Activated T-helper 1 cell treated with anti-CD3 and anti-CD28 coated beads, Interleukin-12 subunit alpha, Interleukin-12 subunit beta, Interleukin-2, Interleukin-4 antibody, amounts not matched to agents 30 ng/mL and 10 ng/mL and 1 ng/mL, durations not matched to agents 14 hours and 24 hours and 36 hours (primary cell): ENCODE measurements at regions of chr21 and their contacts with region 1.

Region 1: DNA sequence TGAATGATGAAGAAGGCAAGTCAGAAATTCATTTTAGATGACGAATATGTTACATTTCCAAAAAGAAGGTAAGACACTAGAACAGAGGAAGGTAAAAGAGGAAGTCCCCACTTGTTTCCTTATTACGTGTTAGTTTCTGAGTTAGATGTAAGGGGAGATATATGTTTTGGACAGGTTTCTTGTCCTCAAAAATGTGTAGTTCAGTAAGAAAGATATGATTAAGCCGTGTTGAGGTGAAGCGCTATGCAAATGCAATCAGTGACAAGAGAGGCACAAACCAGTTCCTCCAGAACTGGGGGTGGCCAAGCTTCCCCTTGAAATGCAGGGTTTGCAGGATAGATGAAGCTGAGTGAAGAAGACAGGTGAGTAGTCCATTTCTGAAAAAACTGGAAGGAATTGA is 293.3 kb upstream of the RUNX1 start:
- DNase-seq: no peak
- H3K4me3 Mint-ChIP-seq: peak overlapping the region; percentile 75
- H3K27ac Mint-ChIP-seq: peak overlapping the region; percentile 99
- H3K4me1 Mint-ChIP-seq: peaks cover 51% of the 10 kb centered on the region
- H3K27me3 Mint-ChIP-seq: no peaks in the 10 kb centered on the region

Region 2: DNA sequence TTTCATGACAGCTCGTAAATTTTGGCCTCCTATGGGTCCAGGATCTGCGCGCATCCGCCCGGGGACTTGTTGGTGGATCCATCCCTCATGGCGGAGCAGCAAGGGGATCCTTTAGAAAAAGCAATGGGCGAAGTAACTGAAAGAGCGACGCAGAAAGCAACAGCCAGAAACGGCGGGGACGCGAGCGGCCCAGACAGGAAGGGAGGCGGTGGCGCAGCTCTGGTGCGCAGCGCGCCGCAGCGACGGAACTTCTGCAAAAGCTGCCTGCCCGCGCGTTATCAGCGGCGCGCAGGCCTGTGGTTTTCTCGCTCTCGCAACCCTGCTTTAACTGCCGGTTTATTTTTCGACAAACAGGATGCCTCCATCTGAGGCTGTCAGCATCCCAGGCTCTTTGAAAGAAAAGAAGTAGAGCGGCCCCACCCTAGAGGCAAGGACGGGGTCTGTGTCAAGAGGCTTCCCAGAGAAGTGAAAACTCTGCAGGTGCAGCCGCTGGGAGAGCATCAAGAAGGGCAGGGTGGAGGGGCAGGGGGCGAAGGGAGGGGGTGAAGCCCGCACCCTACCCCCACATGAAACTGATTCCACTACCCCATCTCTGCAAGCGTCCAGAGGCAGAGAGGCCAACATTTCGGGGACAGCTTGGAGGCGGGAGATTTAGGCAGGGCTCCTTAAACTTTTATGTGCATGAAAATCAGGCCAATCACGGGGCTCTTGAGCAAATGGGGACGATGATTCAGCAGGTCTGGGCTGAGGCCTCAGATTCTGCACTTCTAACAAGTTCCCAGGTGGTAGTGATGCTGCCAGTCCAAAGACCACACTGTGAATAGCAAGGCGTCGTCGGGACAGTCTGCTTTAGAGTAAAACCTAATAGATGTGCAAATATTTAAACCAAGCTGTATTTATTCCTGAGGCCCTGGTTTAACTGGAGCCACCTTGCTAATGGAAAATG is 315.6 kb before region 1 on chr21:
- intact Hi-C with region 1: loop called (anchors 1 kb)
- DNase-seq: peak; percentile 83
- H3K4me3 Mint-ChIP-seq: peak overlapping the region; percentile 85
- H3K27ac Mint-ChIP-seq: peak overlapping the region; percentile 99
- H3K4me1 Mint-ChIP-seq: peaks cover 91% of the 10 kb centered on the region
- H3K27me3 Mint-ChIP-seq: no peaks in the 10 kb centered on the region

Region 3: GRCh38 chr21:35138665-35139381 is 203.6 kb before region 1 on chr21:
- intact Hi-C with region 1: loop called (anchors 1 kb)
- DNase-seq: no peak
- H3K4me3 Mint-ChIP-seq: peak overlapping the region; percentile 62
- H3K27ac Mint-ChIP-seq: peak overlapping the region; percentile 93
- H3K4me1 Mint-ChIP-seq: peaks cover 27% of the 10 kb centered on the region
- H3K27me3 Mint-ChIP-seq: no peaks in the 10 kb centered on the region

Region 4: GRCh38 chr21:35226948-35227744 is 115.3 kb before region 1 on chr21:
- intact Hi-C with region 1: loop called (anchors 5 kb)
- DNase-seq: peak; percentile 42
- H3K4me3 Mint-ChIP-seq: peak overlapping the region; percentile 27
- H3K27ac Mint-ChIP-seq: peak overlapping the region; percentile 6
- H3K4me1 Mint-ChIP-seq: peaks cover 41% of the 10 kb centered on the region
- H3K27me3 Mint-ChIP-seq: peaks cover 10% of the 10 kb centered on the region

Region 5: GRCh38 chr21:35294231-35294898 is 48.1 kb before region 1 on chr21:
- intact Hi-C with region 1: no loop called
- DNase-seq: no peak
- H3K4me3 Mint-ChIP-seq: no peak overlapping the region
- H3K27ac Mint-ChIP-seq: no peak overlapping the region
- H3K4me1 Mint-ChIP-seq: peaks cover 13% of the 10 kb centered on the region
- H3K27me3 Mint-ChIP-seq: peaks cover 2% of the 10 kb centered on the region

Region 6: DNA sequence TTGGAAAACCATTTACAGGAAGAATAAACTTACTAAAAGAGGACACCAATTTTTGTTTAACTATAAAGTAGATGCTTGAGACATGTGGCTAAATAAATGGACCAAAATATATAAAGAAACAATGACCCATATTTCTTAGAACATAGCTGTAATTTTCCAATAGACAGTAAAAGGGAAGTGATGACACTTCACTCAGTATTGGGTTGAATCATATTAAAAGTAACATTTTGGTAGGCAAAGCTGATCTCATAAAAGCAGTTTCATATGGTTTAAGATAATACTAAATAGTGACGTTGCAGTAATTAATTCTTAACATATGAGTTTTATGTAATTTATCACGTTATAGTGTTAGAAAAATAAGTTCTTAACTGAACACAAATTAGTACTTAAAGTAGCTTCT is 15.6 kb after region 1 on chr21:
- intact Hi-C with region 1: loop called (anchors 1 kb)
- DNase-seq: no peak
- H3K4me3 Mint-ChIP-seq: no peak overlapping the region
- H3K27ac Mint-ChIP-seq: peak overlapping the region; percentile 56
- H3K4me1 Mint-ChIP-seq: peaks cover 7% of the 10 kb centered on the region
- H3K27me3 Mint-ChIP-seq: no peaks in the 10 kb centered on the region

Region 7: DNA sequence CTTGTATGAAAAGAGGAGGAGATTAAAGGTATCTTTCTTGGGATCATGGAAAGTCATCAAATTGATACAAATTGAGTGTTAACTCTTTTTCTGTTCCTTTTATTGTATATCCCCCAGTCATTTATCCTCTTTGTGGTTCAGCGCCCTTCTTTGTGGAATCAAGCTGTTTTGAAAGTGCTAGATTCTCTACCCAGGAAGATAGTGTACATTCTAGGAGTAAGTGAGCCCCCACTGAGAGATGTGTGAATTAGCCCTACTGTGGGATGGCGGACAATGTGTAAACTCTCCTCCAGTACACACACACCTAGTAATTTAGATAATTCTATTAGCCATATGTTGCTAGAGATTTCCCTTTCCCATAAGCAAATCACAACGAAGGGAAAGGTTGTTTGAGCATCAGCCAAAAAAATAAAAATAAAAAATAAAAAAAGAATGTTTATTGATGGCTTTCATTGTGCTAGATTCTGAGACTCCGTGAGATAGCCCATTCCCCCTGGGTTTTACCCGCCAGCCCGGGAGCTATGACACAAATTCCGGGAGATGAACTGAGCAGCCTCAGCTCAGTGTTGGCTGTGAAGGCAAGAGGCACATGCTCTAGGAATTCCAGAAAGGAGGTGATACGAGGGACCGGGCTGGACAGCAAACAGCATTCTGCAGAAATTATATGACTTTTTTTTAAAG is 85.0 kb after region 1 on chr21:
- intact Hi-C with region 1: loop called (anchors 2 kb)
- DNase-seq: no peak
- H3K4me3 Mint-ChIP-seq: no peak overlapping the region
- H3K27ac Mint-ChIP-seq: no peak overlapping the region
- H3K4me1 Mint-ChIP-seq: peaks cover 26% of the 10 kb centered on the region
- H3K27me3 Mint-ChIP-seq: peaks cover 12% of the 10 kb centered on the region